ENCODE measurements at regions of chr6 and their contacts with region 1.

Region 1: GRCh38 chr6:89066940-89067646 is 13.5 kb upstream of the PNRC1 start:
- DNase-seq: no peak
- ATAC-seq: no peak
- H3K4me3 ChIP-seq: no peak overlapping the region
- H3K4me3 Mint-ChIP-seq: no peak overlapping the region
- H3K27ac ChIP-seq: no peak overlapping the region
- H3K27ac Mint-ChIP-seq: no peak overlapping the region
- H3K4me1 ChIP-seq: no peaks in the 10 kb centered on the region
- H3K4me1 Mint-ChIP-seq: no peaks in the 10 kb centered on the region
- H3K27me3 ChIP-seq: no peaks in the 10 kb centered on the region
- H3K27me3 Mint-ChIP-seq: no peaks in the 10 kb centered on the region
- CTCF ChIP-seq: no peak

Region 2: DNA sequence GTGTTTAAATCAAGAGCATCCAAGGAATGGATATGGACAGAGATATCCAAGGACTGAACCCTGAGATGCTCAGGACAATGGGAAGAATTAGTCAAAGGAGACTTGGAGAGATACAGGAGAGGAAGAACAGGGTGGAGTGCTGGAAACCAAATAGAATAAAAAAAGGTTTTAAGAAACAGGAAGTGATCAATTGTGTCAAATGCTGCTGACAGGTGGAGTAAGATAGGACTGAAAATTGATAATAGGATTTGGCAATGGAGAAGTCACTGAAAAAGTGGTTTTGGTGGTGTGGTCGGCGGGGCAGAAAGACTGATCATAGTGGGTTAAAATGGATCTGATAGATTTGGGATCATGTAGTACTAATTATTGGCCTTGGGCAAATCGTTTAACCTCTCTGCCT is 24.4 kb before region 1 on chr6:
- CTCF ChIA-PET with region 1: no interaction called
- POLR2A ChIA-PET with region 1: interaction called, 14 read pairs
- intact Hi-C with region 1: no loop called
- DNase-seq: no peak
- ATAC-seq: no peak
- H3K4me3 ChIP-seq: no peak overlapping the region
- H3K4me3 Mint-ChIP-seq: no peak overlapping the region
- H3K27ac ChIP-seq: no peak overlapping the region
- H3K27ac Mint-ChIP-seq: no peak overlapping the region
- H3K4me1 ChIP-seq: peaks cover 7 to 8% of the 10 kb centered on the region in 2 donors
- H3K4me1 Mint-ChIP-seq: peaks cover 6% of the 10 kb centered on the region
- H3K27me3 ChIP-seq: no peaks in the 10 kb centered on the region
- H3K27me3 Mint-ChIP-seq: no peaks in the 10 kb centered on the region
- CTCF ChIP-seq: no peak

Region 3: DNA sequence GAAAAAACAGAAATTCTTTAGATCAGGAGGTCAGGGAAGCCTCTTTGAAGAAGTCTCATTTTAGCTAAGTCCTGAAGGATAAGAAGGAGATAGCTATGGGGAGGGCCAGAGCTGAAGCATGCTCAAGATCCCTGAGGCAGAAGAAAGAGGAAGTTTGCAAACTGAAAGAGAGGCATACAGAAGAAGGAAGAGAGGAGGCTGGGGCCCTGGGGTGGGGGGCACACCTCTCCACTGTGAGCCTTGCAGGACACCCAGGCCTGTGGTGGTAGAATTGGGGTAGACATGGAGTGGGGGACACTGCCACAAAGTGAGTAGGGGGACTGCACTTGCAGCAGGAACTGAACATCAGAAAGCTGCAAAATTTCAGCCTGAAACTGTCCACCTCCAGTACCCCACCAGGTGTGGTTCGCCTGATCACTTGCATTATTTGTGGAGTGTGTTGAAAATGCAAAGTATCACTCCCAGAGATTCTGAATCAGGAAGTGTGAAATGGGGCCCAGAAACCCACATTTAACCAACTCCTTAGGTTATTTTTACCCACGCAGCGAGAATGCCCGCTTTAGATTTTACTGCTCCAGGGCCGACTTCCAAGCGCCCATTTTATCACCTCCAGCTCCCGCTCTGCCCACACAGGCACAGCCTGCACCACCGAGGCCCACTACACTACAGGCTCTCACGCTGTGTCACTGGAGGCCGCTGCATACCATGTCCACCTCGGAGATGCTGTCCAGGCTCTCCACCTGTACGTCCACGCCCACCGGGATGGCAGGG is 204.0 kb after region 1 on chr6:
- CTCF ChIA-PET with region 1: no interaction called
- POLR2A ChIA-PET with region 1: no interaction called
- intact Hi-C with region 1: no loop called
- DNase-seq: peak; percentile 36
- ATAC-seq: peak; percentile 36
- H3K4me3 ChIP-seq: no peak overlapping the region
- H3K4me3 Mint-ChIP-seq: peak overlapping the region; percentile 17
- H3K27ac ChIP-seq: no peak overlapping the region
- H3K27ac Mint-ChIP-seq: no peak overlapping the region
- H3K4me1 ChIP-seq: peaks cover 10 to 14% of the 10 kb centered on the region in 2 donors
- H3K4me1 Mint-ChIP-seq: peaks cover 13% of the 10 kb centered on the region
- H3K27me3 ChIP-seq: no peaks in the 10 kb centered on the region
- H3K27me3 Mint-ChIP-seq: no peaks in the 10 kb centered on the region
- CTCF ChIP-seq: no peak